Activated CD4-positive, alpha-beta memory T cell treated with anti-CD3 and anti-CD28 coated beads, Interleukin-2, amount 10 ng/mL, durations not matched to agents 7 days and 5 days (primary cell): ENCODE measurements at regions of chr11 and their contacts with region 1.

Region 1: GRCh38 chr11:61004180-61004611 is 32.7 kb downstream of the CD6 start:
- DNase-seq: peak; percentile 43
- H3K4me3 Mint-ChIP-seq: peak overlapping the region; percentile 53
- H3K27ac Mint-ChIP-seq: peak overlapping the region; percentile 83
- H3K4me1 Mint-ChIP-seq: peaks cover 77% of the 10 kb centered on the region
- H3K27me3 Mint-ChIP-seq: no peaks in the 10 kb centered on the region

Region 2: GRCh38 chr11:60756307-60757032 is 247.7 kb before region 1 on chr11 and contains the start of gene MS4A15:
- CTCF ChIA-PET with region 1: no interaction called
- POLR2A ChIA-PET with region 1: no interaction called
- DNase-seq: no peak
- H3K4me3 Mint-ChIP-seq: no peak within 1 kb of the TSS
- H3K27ac Mint-ChIP-seq: no peak within 1 kb of the TSS
- H3K4me1 Mint-ChIP-seq: no peaks in the 10 kb centered on the region
- H3K27me3 Mint-ChIP-seq: peaks cover 43% of the 10 kb centered on the region
- total RNA-seq, gene MS4A15: not detected

Region 3: DNA sequence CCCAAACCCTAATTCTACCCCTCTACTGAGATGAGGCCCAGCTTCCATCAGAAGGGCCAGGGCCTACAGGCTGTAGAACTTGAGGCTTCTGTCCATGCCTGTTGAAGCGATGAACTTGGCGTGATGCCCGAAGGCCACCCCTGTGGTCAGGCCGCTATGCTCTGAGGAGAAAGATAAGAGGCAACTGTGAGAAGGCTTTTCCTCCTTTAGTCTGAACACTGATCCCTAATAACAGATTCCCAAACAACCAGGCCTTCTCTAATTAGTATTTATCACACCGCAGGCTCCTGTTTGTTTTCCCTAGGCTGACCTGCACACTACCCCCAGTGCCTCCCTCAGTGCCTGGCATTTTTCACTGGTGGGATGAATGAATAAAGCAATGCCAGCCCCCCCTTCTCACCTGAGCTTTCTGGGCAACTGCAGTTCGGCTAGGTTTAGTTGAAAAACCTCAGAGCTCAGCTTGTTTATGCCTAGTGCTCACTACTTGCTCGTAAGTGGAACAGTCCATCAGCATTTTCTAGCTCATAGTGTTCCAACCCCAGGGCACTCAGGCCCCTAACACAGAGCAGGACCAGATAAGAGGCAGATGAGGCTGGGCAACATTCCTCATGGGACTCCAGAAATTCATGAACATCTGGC is 113.0 kb before region 1 on chr11:
- CTCF ChIA-PET with region 1: no interaction called
- POLR2A ChIA-PET with region 1: no interaction called
- DNase-seq: no peak
- H3K4me3 Mint-ChIP-seq: no peak overlapping the region
- H3K27ac Mint-ChIP-seq: no peak overlapping the region
- H3K4me1 Mint-ChIP-seq: peaks cover 7% of the 10 kb centered on the region
- H3K27me3 Mint-ChIP-seq: no peaks in the 10 kb centered on the region

Region 4: GRCh38 chr11:60992842-60993409 is 11.3 kb before region 1 on chr11:
- CTCF ChIA-PET with region 1: interaction called, 5 read pairs
- POLR2A ChIA-PET with region 1: interaction called, 33 read pairs
- DNase-seq: no peak
- H3K4me3 Mint-ChIP-seq: peak overlapping the region; percentile 63
- H3K27ac Mint-ChIP-seq: peak overlapping the region; percentile 81
- H3K4me1 Mint-ChIP-seq: peaks cover 82% of the 10 kb centered on the region
- H3K27me3 Mint-ChIP-seq: no peaks in the 10 kb centered on the region

Region 5: GRCh38 chr11:61021661-61022212 is 17.5 kb after region 1 on chr11:
- CTCF ChIA-PET with region 1: no interaction called
- POLR2A ChIA-PET with region 1: interaction called, 35 read pairs
- DNase-seq: peak; percentile 83
- H3K4me3 Mint-ChIP-seq: peak overlapping the region; percentile 59
- H3K27ac Mint-ChIP-seq: peak overlapping the region; percentile 91
- H3K4me1 Mint-ChIP-seq: peaks cover 74% of the 10 kb centered on the region
- H3K27me3 Mint-ChIP-seq: no peaks in the 10 kb centered on the region